GM12878 (cell line): ENCODE measurements at regions of chr13 and their contacts with region 1.

Region 1: DNA sequence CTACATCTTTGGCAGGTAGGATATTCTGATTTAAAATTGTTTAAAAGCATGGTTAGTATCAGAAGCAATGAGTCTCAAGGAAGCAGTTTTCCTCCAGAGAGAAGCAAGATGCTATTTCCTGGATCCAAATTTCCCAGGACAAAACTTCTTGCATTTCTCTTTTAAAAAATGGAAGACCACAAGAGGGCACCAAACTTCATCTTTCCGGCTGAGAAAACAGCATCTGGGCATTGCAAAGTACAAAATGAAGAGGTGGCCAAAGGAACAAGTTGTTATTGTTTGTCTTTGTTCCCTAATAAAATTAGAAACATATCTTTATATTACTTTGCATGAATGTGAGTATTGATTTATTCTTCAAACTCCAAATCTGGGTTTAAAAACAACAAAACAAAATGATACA is 60.0 kb upstream of the LRCH1 start:
- DNase-seq: no peak
- ATAC-seq: peak; percentile 64
- H3K4me3 ChIP-seq: no peak overlapping the region
- H3K27ac ChIP-seq: no peak overlapping the region
- H3K4me1 ChIP-seq: peaks cover 3% of the 10 kb centered on the region; the same call in 1 of the 2 replicates
- H3K27me3 ChIP-seq: no peaks in the 10 kb centered on the region
- CTCF ChIP-seq: peak; percentile 45 to 73 (median 53); a peak in 5 of 6 replicates
- EP300 ChIP-seq: no peak
- POLR2A ChIP-seq: no peak
- RAD21 ChIP-seq: peak; percentile 93

Region 2: GRCh38 chr13:45966715-45967114 is 526.2 kb before region 1 on chr13:
- CTCF ChIA-PET with region 1: no interaction called
- POLR2A ChIA-PET with region 1: no interaction called
- RAD21 ChIA-PET with region 1: no interaction called
- SMC1A ChIA-PET with region 1: no interaction called
- in situ Hi-C with region 1: no loop called
- intact Hi-C with region 1: no loop called
- DNase-seq: no peak
- ATAC-seq: no peak
- H3K4me3 ChIP-seq: no peak overlapping the region
- H3K27ac ChIP-seq: no peak overlapping the region
- H3K4me1 ChIP-seq: no peaks in the 10 kb centered on the region
- H3K27me3 ChIP-seq: no peaks in the 10 kb centered on the region
- CTCF ChIP-seq: no peak
- EP300 ChIP-seq: no peak
- POLR2A ChIP-seq: no peak
- RAD21 ChIP-seq: no peak

Region 3: DNA sequence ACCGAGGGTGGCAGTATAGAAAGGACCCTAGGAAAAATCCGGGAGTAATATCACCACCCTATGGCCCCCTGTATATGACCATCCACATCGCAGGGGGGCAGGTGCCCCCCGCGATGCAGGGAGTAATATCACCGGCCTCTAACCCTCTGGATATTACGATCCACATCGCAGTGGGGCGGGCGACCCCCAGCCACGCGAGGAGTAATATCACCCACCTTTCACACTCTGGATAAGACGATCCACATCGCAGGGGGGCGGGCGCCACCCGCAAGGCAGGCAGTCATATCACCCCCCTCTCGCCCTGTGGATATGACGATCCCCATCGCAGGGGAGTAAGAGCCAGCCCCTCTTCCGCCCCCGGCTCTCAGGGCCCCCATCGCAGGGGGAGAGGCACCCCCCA is 29.2 kb before region 1 on chr13:
- CTCF ChIA-PET with region 1: no interaction called
- POLR2A ChIA-PET with region 1: no interaction called
- RAD21 ChIA-PET with region 1: no interaction called
- SMC1A ChIA-PET with region 1: no interaction called
- in situ Hi-C with region 1: no loop called
- intact Hi-C with region 1: no loop called
- DNase-seq: no peak
- ATAC-seq: no peak
- H3K4me3 ChIP-seq: no peak overlapping the region
- H3K27ac ChIP-seq: no peak overlapping the region
- H3K4me1 ChIP-seq: no peaks in the 10 kb centered on the region
- H3K27me3 ChIP-seq: no peaks in the 10 kb centered on the region
- CTCF ChIP-seq: no peak
- EP300 ChIP-seq: no peak
- POLR2A ChIP-seq: no peak
- RAD21 ChIP-seq: no peak

Region 4: GRCh38 chr13:46544208-46544607 is 51.3 kb after region 1 on chr13:
- CTCF ChIA-PET with region 1: interaction called, 3 read pairs
- POLR2A ChIA-PET with region 1: no interaction called
- RAD21 ChIA-PET with region 1: interaction called, 6 read pairs
- SMC1A ChIA-PET with region 1: interaction called, 10 read pairs
- in situ Hi-C with region 1: no loop called
- intact Hi-C with region 1: loop called (anchors 2 kb)
- DNase-seq: peak; percentile 51
- ATAC-seq: peak; percentile 94
- H3K4me3 ChIP-seq: no peak overlapping the region
- H3K27ac ChIP-seq: no peak overlapping the region
- H3K4me1 ChIP-seq: peaks cover 15% of the 10 kb centered on the region
- H3K27me3 ChIP-seq: no peaks in the 10 kb centered on the region
- CTCF ChIP-seq: no peak
- EP300 ChIP-seq: no peak
- POLR2A ChIP-seq: no peak
- RAD21 ChIP-seq: no peak

Region 5: DNA sequence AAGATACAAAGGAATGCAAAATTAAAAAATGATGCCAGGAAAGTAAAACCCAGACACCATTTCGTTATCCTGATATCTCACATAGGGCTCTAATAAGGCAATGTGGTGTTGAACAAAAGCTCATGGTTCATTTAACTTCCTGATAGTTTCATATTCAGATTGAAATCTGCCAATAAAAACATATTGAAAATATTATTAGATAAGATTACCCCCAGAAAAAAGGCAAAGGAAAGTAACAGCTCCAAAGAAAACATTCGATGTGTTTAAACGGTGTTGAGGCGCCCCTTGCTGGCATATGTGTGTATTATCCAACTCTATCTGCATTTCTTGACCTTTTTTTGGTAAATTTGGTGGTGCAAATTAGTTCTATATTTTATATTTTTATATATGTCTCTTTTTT is 228.1 kb after region 1 on chr13:
- CTCF ChIA-PET with region 1: interaction called, 19 read pairs
- POLR2A ChIA-PET with region 1: no interaction called
- RAD21 ChIA-PET with region 1: interaction called, 10 read pairs
- SMC1A ChIA-PET with region 1: interaction called, 17 read pairs
- in situ Hi-C with region 1: loop called (anchors 5 kb)
- intact Hi-C with region 1: loop called (anchors 1 kb)
- DNase-seq: no peak
- ATAC-seq: peak; percentile 65
- H3K4me3 ChIP-seq: no peak overlapping the region
- H3K27ac ChIP-seq: no peak overlapping the region; the same call in 1 of the 2 replicates
- H3K4me1 ChIP-seq: peaks cover 8% of the 10 kb centered on the region; the same call in 1 of the 2 replicates
- H3K27me3 ChIP-seq: no peaks in the 10 kb centered on the region
- CTCF ChIP-seq: peak; percentile 37 to 57 (median 56); a peak in 5 of 6 replicates
- EP300 ChIP-seq: no peak
- POLR2A ChIP-seq: no peak
- RAD21 ChIP-seq: peak; percentile 75

Region 6: GRCh38 chr13:46728777-46729176 is 235.8 kb after region 1 on chr13:
- CTCF ChIA-PET with region 1: interaction called, 5 read pairs
- POLR2A ChIA-PET with region 1: no interaction called
- RAD21 ChIA-PET with region 1: no interaction called
- SMC1A ChIA-PET with region 1: interaction called, 4 read pairs
- in situ Hi-C with region 1: loop called (anchors 5 kb)
- intact Hi-C with region 1: no loop called
- DNase-seq: no peak
- ATAC-seq: peak; percentile 74
- H3K4me3 ChIP-seq: no peak overlapping the region
- H3K27ac ChIP-seq: no peak overlapping the region
- H3K4me1 ChIP-seq: no peaks in the 10 kb centered on the region
- H3K27me3 ChIP-seq: no peaks in the 10 kb centered on the region
- CTCF ChIP-seq: peak in 2 of 3 experiments; percentile 11 to 33; a peak in 3 of 6 replicates
- EP300 ChIP-seq: no peak
- POLR2A ChIP-seq: no peak
- RAD21 ChIP-seq: no peak